Ascending aorta (tissue), 2 donors: ENCODE measurements at regions of chr1 and their contacts with region 1.

Region 1: GRCh38 chr1:61851849-61852669 is 109.8 kb downstream of the PATJ start:
- DNase-seq: no peak
- H3K4me3 ChIP-seq: no peak overlapping the region
- H3K27ac ChIP-seq: peak overlapping the region; percentile 38 to 77
- H3K4me1 ChIP-seq: peaks cover 0 to 26% of the 10 kb centered on the region in 2 donors
- H3K27me3 ChIP-seq: no peaks in the 10 kb centered on the region
- CTCF ChIP-seq: peak; percentile 68 to 78 (median 72)

Region 2: GRCh38 chr1:60153961-60154360 is 1698.1 kb before region 1 on chr1:
- intact Hi-C with region 1: loop called (anchors 10 kb)
- DNase-seq: no peak
- H3K4me3 ChIP-seq: no peak overlapping the region
- H3K27ac ChIP-seq: no peak overlapping the region
- H3K4me1 ChIP-seq: peaks cover 0 to 3% of the 10 kb centered on the region in 2 donors
- H3K27me3 ChIP-seq: no peaks in the 10 kb centered on the region
- CTCF ChIP-seq: no peak

Region 3: GRCh38 chr1:60969971-60970509 is 882.0 kb before region 1 on chr1:
- intact Hi-C with region 1: loop called (anchors 2 kb)
- DNase-seq: no peak
- H3K4me3 ChIP-seq: no peak overlapping the region
- H3K27ac ChIP-seq: peak overlapping the region; percentile 39 to 46
- H3K4me1 ChIP-seq: peaks cover 0 to 24% of the 10 kb centered on the region in 2 donors
- H3K27me3 ChIP-seq: no peaks in the 10 kb centered on the region
- CTCF ChIP-seq: peak in 2 of 3 experiments; percentile 40 to 61

Region 4: DNA sequence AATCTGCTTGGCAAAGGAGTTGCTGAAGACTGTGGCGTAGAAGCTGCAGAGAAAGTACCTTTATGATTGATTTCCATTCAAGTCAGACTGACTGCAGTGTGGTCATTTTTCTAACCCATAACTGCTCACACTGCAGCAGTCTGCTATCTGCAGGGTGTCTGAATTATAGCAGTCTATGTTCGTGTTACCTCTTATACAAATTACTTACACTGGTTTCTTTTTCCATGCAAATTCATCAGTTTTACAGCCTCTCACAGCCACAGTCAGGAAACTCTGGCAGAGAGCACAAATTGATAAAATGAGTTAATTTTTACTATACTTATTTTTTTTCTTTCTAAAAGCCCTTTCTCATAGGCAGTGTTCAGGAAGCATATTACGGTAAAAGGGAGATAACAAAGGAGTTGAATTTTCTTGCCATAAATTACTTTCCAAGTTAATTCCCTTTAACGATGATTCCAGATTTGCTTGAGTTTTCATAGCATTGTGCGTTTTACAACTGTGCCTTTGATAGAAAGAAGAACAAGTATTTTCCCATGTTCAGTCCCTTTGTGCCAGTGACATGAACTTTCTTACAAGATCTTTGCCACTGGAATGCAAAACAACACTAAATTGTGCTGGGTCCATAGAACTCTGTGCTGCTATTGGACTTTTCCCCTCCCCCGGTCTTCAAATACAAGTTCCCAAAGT is 508.2 kb before region 1 on chr1:
- intact Hi-C with region 1: loop called (anchors 5 kb)
- DNase-seq: no peak
- H3K4me3 ChIP-seq: peak overlapping the region in 1 of 2 donors; percentile 5
- H3K27ac ChIP-seq: peak overlapping the region; percentile 36 to 55
- H3K4me1 ChIP-seq: peaks cover 3 to 21% of the 10 kb centered on the region in 2 donors
- H3K27me3 ChIP-seq: no peaks in the 10 kb centered on the region
- CTCF ChIP-seq: no peak

Region 5: GRCh38 chr1:61472876-61473275 is 379.2 kb before region 1 on chr1:
- intact Hi-C with region 1: loop called (anchors 5 kb)
- DNase-seq: no peak
- H3K4me3 ChIP-seq: no peak overlapping the region
- H3K27ac ChIP-seq: no peak overlapping the region
- H3K4me1 ChIP-seq: peaks cover 0 to 9% of the 10 kb centered on the region in 2 donors
- H3K27me3 ChIP-seq: no peaks in the 10 kb centered on the region
- CTCF ChIP-seq: no peak

Region 6: DNA sequence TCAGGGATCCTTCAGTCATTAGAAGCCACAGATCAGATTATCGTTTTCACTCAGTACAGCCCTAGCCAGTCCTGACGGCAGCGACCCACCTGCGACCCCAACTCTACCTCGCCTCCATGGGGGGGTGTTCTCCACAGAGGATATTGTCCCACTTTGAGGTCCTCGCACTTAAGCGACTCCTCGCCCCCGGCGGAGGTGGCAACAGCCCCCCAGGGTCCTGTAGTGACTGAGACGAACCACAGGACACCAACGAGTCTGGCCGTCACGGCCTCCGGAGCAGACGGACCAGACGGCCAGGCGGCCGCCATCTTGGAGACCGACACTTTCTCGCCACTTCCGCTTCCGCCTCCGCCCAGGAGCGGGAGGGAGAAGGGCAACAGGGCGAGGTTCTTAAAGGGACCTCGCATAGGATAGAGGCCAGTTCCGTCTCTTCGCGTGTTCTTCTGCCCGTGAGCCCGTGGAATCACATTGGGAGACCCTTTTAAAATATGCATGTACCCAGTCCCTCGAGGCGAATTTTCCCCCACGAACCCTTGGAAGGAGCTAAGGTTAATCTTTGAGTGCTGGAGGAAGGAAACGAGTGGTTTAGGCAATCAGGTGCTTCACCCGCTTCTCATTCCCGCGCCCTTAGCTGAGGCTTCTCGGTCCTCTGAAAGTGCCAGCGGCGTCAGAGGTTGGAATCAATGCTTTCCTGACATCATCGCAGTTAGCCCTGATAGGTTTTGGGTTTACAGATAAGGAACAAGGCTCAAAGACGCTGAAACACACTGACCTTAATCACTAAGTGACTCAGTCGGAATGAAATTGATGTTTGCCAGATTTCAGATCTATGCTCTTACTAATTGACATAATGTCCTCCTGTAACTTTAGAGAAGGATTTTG is 127.0 kb before region 1 on chr1 and contains the start of gene TM2D1:
- intact Hi-C with region 1: loop called (anchors 5 kb)
- DNase-seq: peak; percentile 55 to 95
- H3K4me3 ChIP-seq: peak within 1 kb of the TSS; percentile 79 to 81
- H3K27ac ChIP-seq: peak within 1 kb of the TSS; percentile 89 to 96
- H3K4me1 ChIP-seq: peaks cover 6 to 12% of the 10 kb centered on the region in 2 donors
- H3K27me3 ChIP-seq: no peaks in the 10 kb centered on the region
- CTCF ChIP-seq: peak in 1 of 3 experiments; percentile 4
- total RNA-seq, gene TM2D1: 43.2 TPM

Region 7: GRCh38 chr1:61812916-61813315 is 39.1 kb before region 1 on chr1:
- intact Hi-C with region 1: no loop called
- DNase-seq: no peak
- H3K4me3 ChIP-seq: no peak overlapping the region
- H3K27ac ChIP-seq: no peak overlapping the region
- H3K4me1 ChIP-seq: peaks cover 0 to 5% of the 10 kb centered on the region in 2 donors
- H3K27me3 ChIP-seq: no peaks in the 10 kb centered on the region
- CTCF ChIP-seq: no peak

Region 8: GRCh38 chr1:61825393-61825792 is 26.7 kb before region 1 on chr1:
- intact Hi-C with region 1: no loop called
- DNase-seq: no peak
- H3K4me3 ChIP-seq: no peak overlapping the region
- H3K27ac ChIP-seq: peak overlapping the region in 1 of 2 donors; percentile 20
- H3K4me1 ChIP-seq: peaks cover 0 to 6% of the 10 kb centered on the region in 2 donors
- H3K27me3 ChIP-seq: no peaks in the 10 kb centered on the region
- CTCF ChIP-seq: no peak

Region 9: GRCh38 chr1:62038594-62039284 is 186.7 kb after region 1 on chr1:
- intact Hi-C with region 1: no loop called
- DNase-seq: no peak
- H3K4me3 ChIP-seq: no peak overlapping the region
- H3K27ac ChIP-seq: no peak overlapping the region
- H3K4me1 ChIP-seq: no peaks in the 10 kb centered on the region
- H3K27me3 ChIP-seq: no peaks in the 10 kb centered on the region
- CTCF ChIP-seq: no peak

Region 10: DNA sequence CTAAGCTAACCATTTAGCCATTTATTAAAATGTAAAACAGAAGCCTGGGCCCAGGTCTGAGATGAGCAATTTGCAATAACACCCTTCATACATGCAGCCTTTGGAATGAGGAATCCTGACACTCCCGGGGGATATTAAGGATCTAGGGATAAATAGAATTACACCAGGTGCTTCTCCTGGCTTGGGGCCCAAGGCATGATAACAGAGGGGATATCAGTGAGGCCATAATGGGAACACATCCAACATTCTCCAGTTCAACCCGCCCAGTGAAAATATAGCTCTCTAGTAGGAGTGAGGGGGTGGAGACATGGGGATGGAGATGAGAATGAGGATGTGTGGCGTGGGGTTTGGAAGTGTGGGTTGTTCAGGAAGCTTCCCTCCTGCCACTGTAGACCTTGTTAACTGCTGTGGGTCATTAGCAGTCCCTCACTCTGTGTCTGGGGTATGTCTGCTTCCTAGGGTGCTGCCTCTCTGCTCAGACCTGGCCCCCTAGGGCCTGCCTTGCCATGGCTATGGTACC is 525.0 kb after region 1 on chr1:
- intact Hi-C with region 1: no loop called
- DNase-seq: no peak
- H3K4me3 ChIP-seq: no peak overlapping the region
- H3K27ac ChIP-seq: no peak overlapping the region
- H3K4me1 ChIP-seq: no peaks in the 10 kb centered on the region
- H3K27me3 ChIP-seq: no peaks in the 10 kb centered on the region
- CTCF ChIP-seq: no peak